ENCODE measurements at regions of chr9 and their contacts with region 1.

Region 1: GRCh38 chr9:128370826-128371621 is at the start of gene URM1:
- DNase-seq: peak; percentile 97
- H3K4me3 Mint-ChIP-seq: peak within 1 kb of the TSS; percentile 86
- H3K27ac Mint-ChIP-seq: peak within 1 kb of the TSS; percentile 94
- H3K4me1 Mint-ChIP-seq: peaks cover 32% of the 10 kb centered on the region
- H3K27me3 Mint-ChIP-seq: no peaks in the 10 kb centered on the region
- total RNA-seq, gene URM1: 65.1 to 78.1 TPM

Region 2: GRCh38 chr9:128781187-128782070 is 410.4 kb after region 1 on chr9:
- CTCF ChIA-PET with region 1: no interaction called
- POLR2A ChIA-PET with region 1: interaction called, 11 read pairs
- DNase-seq: no peak
- H3K4me3 Mint-ChIP-seq: no peak overlapping the region
- H3K27ac Mint-ChIP-seq: no peak overlapping the region
- H3K4me1 Mint-ChIP-seq: peaks cover under 1% of the 10 kb centered on the region
- H3K27me3 Mint-ChIP-seq: no peaks in the 10 kb centered on the region

Measured in activated CD4-positive, alpha-beta T cell treated with anti-CD3 and anti-CD28 coated beads, Interleukin-2, amount 10 ng/mL, durations not matched to agents 7 days and 5 days (primary cell).